ENCODE measurements at regions of chrX and their contacts with region 1.

Region 1: DNA sequence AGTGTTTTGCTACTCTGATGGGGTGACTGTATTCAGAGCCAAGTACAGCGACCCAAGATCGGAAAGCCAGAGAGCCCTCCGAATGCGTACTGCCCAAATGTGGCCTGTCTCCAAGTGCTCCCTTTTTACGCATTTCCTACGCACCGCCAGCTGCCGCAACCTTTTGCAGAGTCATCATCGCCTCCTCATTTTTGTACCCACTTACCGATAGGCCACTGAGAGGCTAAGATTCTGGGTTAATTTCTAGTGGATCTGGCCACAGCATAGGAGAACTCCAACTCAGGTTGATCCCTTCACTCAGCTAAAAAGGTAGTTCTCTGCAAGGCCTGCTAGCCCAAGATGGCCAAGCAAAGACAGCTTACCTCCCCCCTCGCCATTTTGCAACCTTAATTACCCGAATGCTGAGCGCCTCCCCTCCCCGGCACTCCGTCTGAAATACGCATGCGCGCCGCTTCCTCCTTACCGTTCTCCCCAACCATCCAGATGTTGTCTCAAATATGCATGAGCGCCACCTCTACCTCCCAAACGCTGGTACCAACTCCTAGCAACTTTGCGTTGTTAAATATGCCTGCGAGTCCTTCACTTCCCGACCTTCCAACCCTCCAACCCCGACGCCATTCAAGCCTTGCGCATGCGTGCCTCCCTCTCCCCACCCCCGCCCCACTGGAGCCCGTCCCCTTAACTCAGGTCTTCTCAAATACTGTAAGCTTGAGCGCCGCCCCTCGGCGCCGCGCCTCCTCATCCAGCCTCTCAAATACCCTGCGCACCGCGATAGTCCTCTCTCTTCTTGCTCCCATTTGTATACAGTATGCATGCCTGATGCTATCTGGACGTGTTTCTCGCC is 11.8 kb upstream of the ZCCHC13 start:
- DNase-seq: peak; percentile 88
- H3K4me3 ChIP-seq: peak overlapping the region; percentile 64 to 95 (median 81)
- H3K27ac ChIP-seq: peak overlapping the region; percentile 90
- H3K4me1 ChIP-seq: no peaks in the 10 kb centered on the region
- H3K27me3 ChIP-seq: no peaks in the 10 kb centered on the region
- CTCF ChIP-seq: peak in 1 of 2 donors; percentile 7
- POLR2A ChIP-seq: peak; percentile 85

Region 2: DNA sequence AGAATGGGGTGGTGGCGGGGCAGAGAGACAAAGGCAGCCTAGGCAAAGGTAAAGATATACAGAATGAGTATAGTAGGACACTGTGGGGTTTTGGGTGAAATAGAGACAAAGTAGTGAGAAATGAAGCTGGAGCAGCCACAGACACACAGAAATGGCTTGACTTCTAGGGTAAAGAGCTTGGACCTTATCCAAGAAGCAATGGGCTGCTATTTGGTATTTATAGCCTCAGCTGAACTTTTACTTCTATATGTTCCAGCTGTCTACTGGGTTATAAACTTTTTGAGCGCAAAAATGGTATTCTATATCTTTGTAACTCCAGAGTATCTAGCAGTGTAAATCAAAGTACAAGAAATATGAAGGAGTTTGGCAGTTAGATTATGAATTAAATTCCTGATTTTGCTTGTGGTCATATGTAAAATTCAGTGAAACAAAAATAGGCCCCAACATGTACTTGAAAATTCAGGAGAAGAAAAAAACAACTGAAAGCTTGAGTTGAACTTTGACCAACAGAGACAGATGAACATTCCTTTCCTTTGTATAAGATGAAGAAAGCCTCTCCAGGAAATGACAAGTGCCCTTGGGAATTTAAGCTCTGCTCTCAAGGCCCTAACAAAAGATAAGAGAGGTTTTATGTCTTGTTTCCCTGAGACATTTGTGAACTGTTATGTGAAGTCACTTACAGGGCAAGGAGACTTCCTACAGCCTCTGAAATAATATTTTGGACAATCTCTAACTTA is 375.1 kb before region 1 on chrX:
- CTCF ChIA-PET with region 1: no interaction called
- POLR2A ChIA-PET with region 1: no interaction called
- dilution Hi-C with region 1: no loop called
- intact Hi-C with region 1: loop called (anchors 2 kb)
- DNase-seq: peak; percentile 90
- H3K4me3 ChIP-seq: no peak overlapping the region
- H3K27ac ChIP-seq: peak overlapping the region; percentile 95
- H3K4me1 ChIP-seq: peaks cover 45% of the 10 kb centered on the region
- H3K27me3 ChIP-seq: no peaks in the 10 kb centered on the region
- CTCF ChIP-seq: no peak
- POLR2A ChIP-seq: peak; percentile 41

Region 3: DNA sequence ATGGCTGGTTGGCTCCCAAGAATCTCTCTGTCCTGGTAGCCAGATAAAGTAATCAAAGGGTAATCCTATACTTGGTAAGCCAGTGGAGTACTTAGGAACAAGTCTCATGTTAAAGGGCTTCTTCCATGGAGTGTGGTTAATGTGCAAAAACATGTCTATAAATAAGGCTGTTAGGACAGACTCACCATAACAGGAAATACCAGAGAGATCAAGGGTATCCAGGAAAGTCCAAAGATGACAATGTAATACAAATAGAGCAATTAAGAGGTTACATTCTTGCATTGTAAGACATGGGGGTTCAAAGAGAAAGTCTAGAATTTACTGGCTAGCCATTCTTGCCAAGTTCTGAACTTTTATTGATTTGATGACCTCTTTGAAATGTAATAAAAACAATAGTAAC is 50.1 kb before region 1 on chrX:
- CTCF ChIA-PET with region 1: no interaction called
- POLR2A ChIA-PET with region 1: no interaction called
- dilution Hi-C with region 1: no loop called
- intact Hi-C with region 1: loop called (anchors 2 kb)
- DNase-seq: peak; percentile 83
- H3K4me3 ChIP-seq: no peak overlapping the region
- H3K27ac ChIP-seq: peak overlapping the region; percentile 97
- H3K4me1 ChIP-seq: peaks cover 32% of the 10 kb centered on the region
- H3K27me3 ChIP-seq: no peaks in the 10 kb centered on the region
- CTCF ChIP-seq: no peak
- POLR2A ChIP-seq: no peak

Region 4: GRCh38 chrX:74318672-74319071 is 26.5 kb after region 1 on chrX:
- CTCF ChIA-PET with region 1: interaction called, 5 read pairs
- POLR2A ChIA-PET with region 1: interaction called, 3 read pairs
- dilution Hi-C with region 1: no loop called
- intact Hi-C with region 1: loop called (anchors 2 kb)
- DNase-seq: no peak
- H3K4me3 ChIP-seq: no peak overlapping the region
- H3K27ac ChIP-seq: no peak overlapping the region
- H3K4me1 ChIP-seq: no peaks in the 10 kb centered on the region
- H3K27me3 ChIP-seq: peaks cover 0 to 5% of the 10 kb centered on the region in 2 experiments
- CTCF ChIP-seq: no peak
- POLR2A ChIP-seq: no peak

Region 5: GRCh38 chrX:74343343-74344279 is 51.4 kb after region 1 on chrX:
- CTCF ChIA-PET with region 1: interaction called, 17 read pairs
- POLR2A ChIA-PET with region 1: interaction called, 5 read pairs
- dilution Hi-C with region 1: no loop called
- intact Hi-C with region 1: loop called (anchors 1 kb)
- DNase-seq: peak; percentile 90
- H3K4me3 ChIP-seq: no peak overlapping the region
- H3K27ac ChIP-seq: no peak overlapping the region
- H3K4me1 ChIP-seq: no peaks in the 10 kb centered on the region
- H3K27me3 ChIP-seq: no peaks in the 10 kb centered on the region
- CTCF ChIP-seq: peak; percentile 24 to 35
- POLR2A ChIP-seq: no peak

Region 6: DNA sequence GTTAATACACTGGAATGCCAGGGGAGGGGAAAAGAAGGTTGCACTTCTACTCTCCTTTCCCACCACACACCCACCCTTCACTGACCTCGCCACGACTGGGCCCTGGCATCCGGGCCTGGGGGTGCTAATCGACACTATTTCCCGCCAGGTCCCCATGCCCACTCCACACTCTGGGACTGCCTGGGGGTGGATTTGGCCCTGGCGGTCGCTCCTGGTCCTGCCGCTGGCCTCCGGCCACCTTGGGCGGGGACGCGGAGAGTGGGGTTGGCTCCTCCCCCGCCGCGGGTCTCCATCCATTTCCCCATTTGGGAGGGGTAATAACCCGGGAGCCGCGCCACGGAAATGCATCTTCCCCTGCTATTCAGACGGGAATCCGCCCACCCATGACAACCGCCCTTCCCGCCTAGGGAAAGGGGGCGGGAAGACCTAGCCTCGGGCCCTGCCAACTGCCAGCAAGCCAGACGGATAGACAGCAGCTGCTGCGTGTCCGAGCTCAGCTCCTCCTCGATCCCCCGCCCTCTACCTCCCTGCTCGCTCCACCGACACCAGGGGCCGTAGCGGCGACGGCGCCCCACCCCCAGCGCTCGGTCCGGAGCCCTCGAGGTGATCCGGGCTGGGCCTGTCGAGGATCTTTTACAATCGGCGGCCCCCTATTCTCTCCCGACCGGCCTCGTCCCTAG is 244.1 kb after region 1 on chrX:
- CTCF ChIA-PET with region 1: no interaction called
- POLR2A ChIA-PET with region 1: no interaction called
- dilution Hi-C with region 1: no loop called
- intact Hi-C with region 1: loop called (anchors 5 kb)
- DNase-seq: peak; percentile 72
- H3K4me3 ChIP-seq: peak overlapping the region; percentile 32 to 46 (median 35)
- H3K27ac ChIP-seq: peak overlapping the region; percentile 68
- H3K4me1 ChIP-seq: peaks cover 9% of the 10 kb centered on the region
- H3K27me3 ChIP-seq: no peaks in the 10 kb centered on the region
- CTCF ChIP-seq: peak; percentile 23 to 50
- POLR2A ChIP-seq: no peak

Region 7: GRCh38 chrX:74614093-74614909 is 322.1 kb after region 1 on chrX and contains the start of gene RLIM:
- CTCF ChIA-PET with region 1: no interaction called
- POLR2A ChIA-PET with region 1: no interaction called
- dilution Hi-C with region 1: no loop called
- intact Hi-C with region 1: loop called (anchors 5 kb)
- DNase-seq: peak; percentile 96
- H3K4me3 ChIP-seq: peak within 1 kb of the TSS; percentile 73 to 99 (median 87)
- H3K27ac ChIP-seq: peak within 1 kb of the TSS; percentile 99
- H3K4me1 ChIP-seq: peaks cover 15% of the 10 kb centered on the region
- H3K27me3 ChIP-seq: no peaks in the 10 kb centered on the region
- CTCF ChIP-seq: no peak
- POLR2A ChIP-seq: peak; percentile 54
- total RNA-seq, gene RLIM: 40.1 and 41.7 TPM in 2 replicates

Measured in endothelial cell of umbilical vein (primary cell).